ENCODE measurements at regions of chr19 and their contacts with region 1.

Region 1: DNA sequence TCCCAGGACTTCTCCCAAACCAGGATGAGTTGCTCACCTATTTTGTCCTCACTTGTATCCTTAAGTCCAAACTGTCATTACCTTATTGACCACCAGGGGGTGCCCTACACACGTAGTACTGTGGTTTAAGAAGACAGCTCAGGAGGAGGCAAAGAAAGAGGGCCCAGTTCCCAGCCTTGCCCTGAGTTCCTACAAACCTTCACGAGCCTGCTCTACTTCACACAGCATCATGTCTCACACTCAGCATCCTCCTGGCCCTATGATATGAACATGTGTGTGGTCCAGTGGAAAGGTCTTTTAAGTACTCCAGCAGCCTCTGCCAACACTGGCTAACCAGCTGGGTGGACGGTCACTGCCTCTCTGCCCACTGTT is 8.1 kb upstream of the ZNF784 start:
- DNase-seq: peak; percentile 95
- H3K4me3 ChIP-seq: no peak overlapping the region
- H3K27ac ChIP-seq: peak overlapping the region; percentile 11
- H3K27me3 ChIP-seq: no peaks in the 10 kb centered on the region
- CTCF ChIP-seq: peak; percentile 87

Region 2: GRCh38 chr19:55516878-55517620 is 115.4 kb before region 1 on chr19:
- CTCF ChIA-PET with region 1: interaction called, 33 read pairs
- POLR2A ChIA-PET with region 1: no interaction called
- DNase-seq: peak; percentile 86
- H3K4me3 ChIP-seq: peak overlapping the region; percentile 44
- H3K27ac ChIP-seq: no peak overlapping the region
- H3K27me3 ChIP-seq: no peaks in the 10 kb centered on the region
- CTCF ChIP-seq: peak; percentile 90

Region 3: GRCh38 chr19:55554741-55555152 is 77.7 kb before region 1 on chr19:
- CTCF ChIA-PET with region 1: no interaction called
- POLR2A ChIA-PET with region 1: no interaction called
- DNase-seq: no peak
- H3K4me3 ChIP-seq: no peak overlapping the region
- H3K27ac ChIP-seq: no peak overlapping the region
- H3K27me3 ChIP-seq: peaks cover under 1% of the 10 kb centered on the region
- CTCF ChIP-seq: no peak

Region 4: GRCh38 chr19:55599468-55600279 is 32.8 kb before region 1 on chr19 and contains the start of gene FIZ1:
- CTCF ChIA-PET with region 1: interaction called, 3 read pairs
- POLR2A ChIA-PET with region 1: interaction called, 11 read pairs
- DNase-seq: peak; percentile 98
- H3K4me3 ChIP-seq: peak within 1 kb of the TSS; percentile 87
- H3K27ac ChIP-seq: peak within 1 kb of the TSS; percentile 94
- H3K27me3 ChIP-seq: no peaks in the 10 kb centered on the region
- CTCF ChIP-seq: no peak
- polyA plus RNA-seq, gene FIZ1: 3.7 and 4.5 TPM in 2 replicates

Region 5: GRCh38 chr19:55605207-55605636 is 27.2 kb before region 1 on chr19:
- CTCF ChIA-PET with region 1: interaction called, 17 read pairs
- POLR2A ChIA-PET with region 1: interaction called, 10 read pairs
- DNase-seq: peak; percentile 94
- H3K4me3 ChIP-seq: peak overlapping the region; percentile 73
- H3K27ac ChIP-seq: peak overlapping the region; percentile 88
- H3K27me3 ChIP-seq: no peaks in the 10 kb centered on the region
- CTCF ChIP-seq: no peak

Region 6: GRCh38 chr19:55653758-55654539 is 21.5 kb after region 1 on chr19:
- CTCF ChIA-PET with region 1: interaction called, 20 read pairs
- POLR2A ChIA-PET with region 1: interaction called, 8 read pairs
- DNase-seq: peak; percentile 99
- H3K4me3 ChIP-seq: peak overlapping the region; percentile 92
- H3K27ac ChIP-seq: peak overlapping the region; percentile 97
- H3K27me3 ChIP-seq: no peaks in the 10 kb centered on the region
- CTCF ChIP-seq: peak; percentile 100

Region 7: GRCh38 chr19:55670280-55671053 is 38.0 kb after region 1 on chr19:
- CTCF ChIA-PET with region 1: interaction called, 22 read pairs
- POLR2A ChIA-PET with region 1: no interaction called
- DNase-seq: no peak
- H3K4me3 ChIP-seq: no peak overlapping the region
- H3K27ac ChIP-seq: no peak overlapping the region
- H3K27me3 ChIP-seq: no peaks in the 10 kb centered on the region
- CTCF ChIP-seq: no peak

Region 8: GRCh38 chr19:55809381-55810058 is 177.1 kb after region 1 on chr19:
- CTCF ChIA-PET with region 1: interaction called, 10 read pairs
- POLR2A ChIA-PET with region 1: no interaction called
- DNase-seq: no peak
- H3K4me3 ChIP-seq: no peak overlapping the region
- H3K27ac ChIP-seq: no peak overlapping the region
- H3K27me3 ChIP-seq: no peaks in the 10 kb centered on the region
- CTCF ChIP-seq: no peak

Measured in AG04450 (cell line).